Ascending aorta (tissue), 2 donors: ENCODE measurements at regions of chr3 and their contacts with region 1.

Region 1: GRCh38 chr3:177050501-177051237 is 146.6 kb downstream of the TBL1XR1 start:
- DNase-seq: no peak
- H3K4me3 ChIP-seq: no peak overlapping the region
- H3K27ac ChIP-seq: no peak overlapping the region
- H3K4me1 ChIP-seq: peaks cover 0 to 8% of the 10 kb centered on the region in 2 donors
- H3K27me3 ChIP-seq: no peaks in the 10 kb centered on the region
- CTCF ChIP-seq: peak; percentile 56 to 60 (median 59)

Region 2: DNA sequence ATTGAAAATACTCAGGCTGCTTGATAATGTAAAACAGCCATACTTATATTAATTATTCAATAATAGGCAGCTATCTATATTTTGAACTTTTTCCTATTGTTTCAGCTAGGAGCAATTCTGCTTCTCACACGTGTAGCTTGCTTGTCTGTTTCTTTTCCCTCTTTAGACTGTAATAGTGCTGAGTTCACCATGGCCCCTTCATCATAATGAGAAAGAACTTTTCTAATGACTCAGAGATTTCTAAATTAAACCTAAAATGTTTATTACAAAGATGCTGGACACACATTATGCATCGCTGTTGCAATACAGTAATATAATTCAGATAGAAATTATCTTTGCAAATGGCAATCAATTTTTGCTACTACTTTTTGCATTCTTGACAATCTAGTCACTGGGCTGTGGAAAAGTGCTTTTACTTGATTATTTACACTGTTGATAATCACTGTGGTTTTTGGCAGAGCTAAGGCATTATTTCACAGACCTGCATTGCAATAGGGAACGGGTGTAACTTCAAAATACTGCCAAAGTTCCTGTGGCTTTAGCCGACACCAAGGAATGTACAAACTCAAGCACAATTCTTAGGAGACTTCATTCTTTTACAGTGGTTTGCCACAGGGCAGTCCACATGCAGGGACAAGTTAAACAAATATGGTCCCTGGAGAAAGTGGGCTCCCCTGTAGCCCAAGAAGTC is 427.6 kb after region 1 on chr3:
- intact Hi-C with region 1: loop called (anchors 5 kb)
- DNase-seq: peak in 1 of 2 donors; percentile 79
- H3K4me3 ChIP-seq: no peak overlapping the region
- H3K27ac ChIP-seq: peak overlapping the region; percentile 69 to 75
- H3K4me1 ChIP-seq: peaks cover 0 to 25% of the 10 kb centered on the region in 2 donors
- H3K27me3 ChIP-seq: no peaks in the 10 kb centered on the region
- CTCF ChIP-seq: no peak

Region 3: GRCh38 chr3:178325330-178325729 is 1274.7 kb after region 1 on chr3:
- intact Hi-C with region 1: loop called (anchors 5 kb)
- DNase-seq: no peak
- H3K4me3 ChIP-seq: no peak overlapping the region
- H3K27ac ChIP-seq: no peak overlapping the region
- H3K4me1 ChIP-seq: peaks cover 0 to 15% of the 10 kb centered on the region in 2 donors
- H3K27me3 ChIP-seq: no peaks in the 10 kb centered on the region
- CTCF ChIP-seq: peak in 2 of 3 experiments; percentile 47 to 54

Region 4: DNA sequence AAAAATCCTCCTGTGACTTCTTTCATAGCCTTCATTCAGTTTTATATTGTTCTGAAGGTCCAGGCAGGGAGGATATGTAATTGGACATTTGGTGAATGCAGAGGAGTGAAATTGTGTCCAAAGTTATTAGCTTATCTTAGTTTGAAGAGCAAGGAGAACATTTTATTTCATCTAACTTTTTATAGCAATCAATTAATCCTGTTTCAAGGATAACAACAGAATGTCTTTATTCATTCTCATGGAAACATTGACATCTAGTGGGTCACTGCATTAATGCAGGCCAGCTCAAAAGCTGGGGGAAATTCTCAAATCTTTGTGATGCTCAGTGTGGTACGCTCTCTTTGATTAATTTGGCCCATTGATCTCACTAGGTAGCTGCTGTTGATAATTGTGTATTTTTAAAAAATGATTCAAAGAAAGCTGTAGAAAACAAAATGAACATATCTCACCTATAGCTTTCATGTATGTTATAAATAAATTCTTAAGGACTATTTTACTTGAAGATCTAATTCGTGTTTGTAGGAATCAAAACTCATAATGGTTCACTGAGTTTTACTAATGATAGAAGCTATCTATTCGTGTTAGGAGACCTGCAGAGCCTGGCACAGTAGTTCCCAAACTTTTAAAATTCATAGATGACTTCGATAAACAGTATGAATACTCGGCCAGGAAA is 1334.7 kb after region 1 on chr3:
- intact Hi-C with region 1: loop called (anchors 2 kb)
- DNase-seq: no peak
- H3K4me3 ChIP-seq: no peak overlapping the region
- H3K27ac ChIP-seq: peak overlapping the region in 1 of 2 donors; percentile 43
- H3K4me1 ChIP-seq: peaks cover 3 to 17% of the 10 kb centered on the region in 2 donors
- H3K27me3 ChIP-seq: no peaks in the 10 kb centered on the region
- CTCF ChIP-seq: peak; percentile 75 to 87 (median 82)